Uterus (tissue), 4 donors: ENCODE measurements at regions of chr4 and their contacts with region 1.

Region 1: DNA sequence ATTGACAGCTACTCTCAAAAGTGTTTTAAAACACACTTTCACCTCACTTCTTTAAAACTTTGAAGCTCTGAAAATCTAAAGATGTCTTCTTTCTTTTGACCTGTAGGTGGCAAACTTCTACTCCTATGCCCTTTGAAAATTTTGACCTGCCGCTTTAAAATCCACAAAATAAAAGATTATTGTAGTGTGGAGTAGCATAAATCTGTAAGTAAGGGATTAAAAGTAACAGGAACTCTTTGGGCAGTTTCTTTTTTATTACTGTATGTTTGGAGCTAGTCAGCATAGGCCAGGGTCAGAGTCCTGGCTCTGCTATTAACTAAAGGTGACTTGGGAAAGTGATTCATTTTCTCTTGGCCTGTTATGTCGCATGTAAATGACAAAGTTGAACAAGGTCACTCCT is 25.5 kb downstream of the BBS12 start:
- DNase-seq: no peak
- H3K4me3 ChIP-seq: no peak overlapping the region
- H3K27ac ChIP-seq: no peak overlapping the region
- H3K4me1 ChIP-seq: no peaks in the 10 kb centered on the region
- H3K27me3 ChIP-seq: no peaks in the 10 kb centered on the region
- CTCF ChIP-seq: peak; percentile 73 to 76 (median 74)
- POLR2A ChIP-seq: no peak

Region 2: GRCh38 chr4:122434285-122434684 is 323.7 kb before region 1 on chr4:
- intact Hi-C with region 1: no loop called
- DNase-seq: no peak
- H3K4me3 ChIP-seq: no peak overlapping the region
- H3K27ac ChIP-seq: no peak overlapping the region
- H3K4me1 ChIP-seq: no peaks in the 10 kb centered on the region
- H3K27me3 ChIP-seq: no peaks in the 10 kb centered on the region
- CTCF ChIP-seq: no peak
- POLR2A ChIP-seq: no peak

Region 3: GRCh38 chr4:122922877-122923511 is 165.0 kb after region 1 on chr4:
- intact Hi-C with region 1: loop called (anchors 5 kb)
- DNase-seq: peak; percentile 83 to 86
- H3K4me3 ChIP-seq: peak overlapping the region; percentile 76 to 83
- H3K27ac ChIP-seq: peak overlapping the region; percentile 79 to 81
- H3K4me1 ChIP-seq: peaks cover 0 to 6% of the 10 kb centered on the region in 2 donors
- H3K27me3 ChIP-seq: no peaks in the 10 kb centered on the region
- CTCF ChIP-seq: no peak
- POLR2A ChIP-seq: peak in 1 of 2 donors; percentile 15